PC-9 (cell line): ENCODE measurements at regions of chr3 and their contacts with region 1.

Region 1: GRCh38 chr3:50298836-50299637 is at the starts of genes HYAL3 and NAA80:
- DNase-seq: peak; percentile 94 to 99
- H3K4me3 ChIP-seq: peak within 1 kb of the TSS; percentile 95
- H3K27ac ChIP-seq: peak within 1 kb of the TSS; percentile 76
- H3K4me1 ChIP-seq: peaks cover 20% of the 10 kb centered on the region
- H3K27me3 ChIP-seq: no peaks in the 10 kb centered on the region
- CTCF ChIP-seq: no peak
- total RNA-seq, gene HYAL3: 10.2 and 12.2 TPM in 2 replicates
- total RNA-seq, gene NAA80: 25.2 and 25.7 TPM in 2 replicates

Region 2: DNA sequence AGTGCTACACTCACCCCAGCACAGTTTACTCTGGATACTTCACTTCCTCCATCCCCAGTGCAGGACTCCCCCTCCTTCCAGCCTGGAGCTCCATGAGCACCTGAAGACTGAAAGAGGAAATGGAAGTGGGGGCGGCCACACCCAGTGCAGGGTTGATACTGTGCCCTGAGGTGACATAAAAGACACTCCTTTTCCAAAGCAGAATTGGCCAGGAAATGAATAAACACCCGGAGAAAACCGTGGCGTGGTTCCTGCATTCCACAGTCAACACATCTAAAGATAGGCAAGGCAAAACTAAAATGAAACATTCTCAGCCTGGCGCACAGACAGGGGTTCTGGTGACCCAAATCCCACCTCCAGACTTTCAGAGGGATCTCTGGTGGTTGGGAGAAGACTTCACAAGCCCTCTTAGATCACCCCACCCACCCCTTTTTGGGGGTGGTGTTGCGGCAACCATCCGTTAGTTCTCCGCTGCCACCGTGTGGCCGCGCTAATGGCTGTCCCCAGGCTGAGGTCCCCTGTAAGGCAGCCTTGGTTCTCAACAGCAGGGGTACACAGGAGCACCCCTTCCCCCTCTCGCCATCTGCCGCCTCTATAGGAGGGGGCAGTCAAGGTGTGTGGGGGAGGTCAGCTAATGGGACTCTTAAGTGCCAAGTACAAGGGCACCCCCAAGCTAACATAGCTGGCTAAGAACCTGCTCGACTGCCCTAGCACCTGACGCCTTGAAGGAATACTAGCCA is 392.9 kb before region 1 on chr3:
- CTCF ChIA-PET with region 1: no interaction called
- POLR2A ChIA-PET with region 1: no interaction called
- intact Hi-C with region 1: no loop called
- DNase-seq: peak; percentile 73 to 78
- H3K4me3 ChIP-seq: peak overlapping the region; percentile 43; the same call in 1 of the 2 replicates
- H3K27ac ChIP-seq: peak overlapping the region; percentile 50
- H3K4me1 ChIP-seq: peaks cover 38% of the 10 kb centered on the region
- H3K27me3 ChIP-seq: no peaks in the 10 kb centered on the region
- CTCF ChIP-seq: peak; percentile 70

Region 3: DNA sequence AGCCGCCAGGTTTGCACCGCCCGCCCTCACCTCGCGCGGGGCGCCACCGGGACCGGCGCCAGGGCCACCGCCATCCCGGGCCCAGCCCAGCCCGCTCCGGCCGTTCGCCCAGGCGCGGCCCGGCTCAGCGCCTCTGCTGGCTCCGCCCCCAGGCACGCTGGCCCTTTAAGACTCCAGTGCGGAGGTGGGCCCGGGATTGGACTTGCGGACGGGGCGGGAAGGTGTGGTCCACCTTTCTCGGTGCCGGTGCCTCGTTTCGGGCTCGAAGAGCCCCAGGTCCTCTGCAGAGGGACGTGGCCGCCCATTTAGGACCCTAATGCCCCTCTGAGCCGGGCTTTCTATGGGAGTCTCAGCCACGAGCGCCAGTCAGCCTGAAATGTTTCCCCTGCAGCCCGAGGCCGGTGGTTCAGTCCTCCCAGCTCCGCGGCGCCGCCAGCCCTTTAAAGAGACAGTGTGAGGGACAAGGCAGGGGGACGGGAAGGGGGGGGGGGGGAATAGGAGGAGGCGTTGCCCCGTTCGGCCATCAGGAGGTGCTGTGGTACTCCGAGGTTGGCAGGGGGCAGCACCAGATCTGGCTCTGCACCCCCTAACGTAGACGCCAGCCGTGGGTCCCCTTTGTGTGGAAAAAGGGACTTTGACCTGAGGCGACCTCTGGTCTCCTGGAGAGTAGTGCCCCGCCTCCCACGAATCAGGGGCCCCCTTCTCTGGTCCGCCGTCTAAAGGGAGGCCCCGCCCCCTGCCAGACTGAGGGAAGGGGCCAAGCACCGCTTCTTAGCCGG is 22.5 kb after region 1 on chr3:
- CTCF ChIA-PET with region 1: interaction called, 7 read pairs
- POLR2A ChIA-PET with region 1: interaction called, 36 read pairs
- intact Hi-C with region 1: loop called (anchors 1 kb)
- DNase-seq: peak; percentile 69 to 89
- H3K4me3 ChIP-seq: peak overlapping the region; percentile 69
- H3K27ac ChIP-seq: peak overlapping the region; percentile 83
- H3K4me1 ChIP-seq: peaks cover 31% of the 10 kb centered on the region
- H3K27me3 ChIP-seq: no peaks in the 10 kb centered on the region
- CTCF ChIP-seq: peak; percentile 62

Region 4: DNA sequence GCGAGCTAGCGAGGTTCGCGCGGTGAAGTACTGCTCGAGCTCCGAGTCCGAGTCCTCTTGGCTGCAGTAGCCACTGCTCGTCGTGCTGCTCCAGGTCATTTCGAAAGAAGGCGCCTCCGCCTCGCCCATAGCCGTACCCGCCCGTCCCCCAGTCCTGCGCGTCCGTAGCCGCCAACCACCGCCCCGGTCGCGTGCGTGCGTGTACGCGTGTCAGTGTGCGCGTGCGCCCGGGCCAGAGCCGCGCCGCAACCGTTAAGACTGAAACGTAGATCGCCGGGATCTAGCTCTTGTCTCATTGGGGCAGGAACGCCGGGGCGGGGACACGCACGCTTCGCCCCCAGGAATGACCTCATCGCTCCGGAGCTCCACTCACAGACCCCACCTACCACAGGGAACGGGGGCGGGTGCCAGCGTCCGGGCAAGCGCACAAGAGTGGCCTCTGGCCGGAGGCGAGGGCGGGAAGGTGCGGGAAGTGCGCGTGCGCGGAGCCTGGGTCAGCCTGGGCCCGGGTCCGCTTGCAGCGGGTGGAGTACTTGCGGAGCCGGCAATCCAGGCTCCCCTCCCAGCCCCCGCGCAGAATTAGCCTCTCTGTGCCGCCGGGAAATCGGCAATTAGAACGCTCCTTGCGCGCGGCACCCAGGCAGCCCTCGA is 38.3 kb after region 1 on chr3:
- CTCF ChIA-PET with region 1: no interaction called
- POLR2A ChIA-PET with region 1: interaction called, 5 read pairs
- intact Hi-C with region 1: loop called (anchors 1 kb)
- DNase-seq: peak; percentile 92 to 99
- H3K4me3 ChIP-seq: peak overlapping the region; percentile 83
- H3K27ac ChIP-seq: peak overlapping the region; percentile 64
- H3K4me1 ChIP-seq: peaks cover 25% of the 10 kb centered on the region
- H3K27me3 ChIP-seq: no peaks in the 10 kb centered on the region
- CTCF ChIP-seq: no peak